ENCODE measurements at regions of chr1 and their contacts with region 1.

Region 1: GRCh38 chr1:60281360-60281932 is 207.9 kb upstream of the C1orf87 start:
- DNase-seq: peak; percentile 61 to 67
- H3K4me3 ChIP-seq: no peak overlapping the region
- H3K27ac ChIP-seq: no peak overlapping the region
- H3K4me1 ChIP-seq: peaks cover 10% of the 10 kb centered on the region in 2 donors
- H3K27me3 ChIP-seq: no peaks in the 10 kb centered on the region
- CTCF ChIP-seq: peak; percentile 72 to 94 (median 88)
- POLR2A ChIP-seq: no peak

Region 2: GRCh38 chr1:60367532-60367931 is 86.1 kb after region 1 on chr1:
- intact Hi-C with region 1: no loop called
- DNase-seq: no peak
- H3K4me3 ChIP-seq: no peak overlapping the region
- H3K27ac ChIP-seq: no peak overlapping the region
- H3K4me1 ChIP-seq: no peaks in the 10 kb centered on the region
- H3K27me3 ChIP-seq: no peaks in the 10 kb centered on the region
- CTCF ChIP-seq: no peak
- POLR2A ChIP-seq: no peak

Region 3: GRCh38 chr1:60573726-60574409 is 292.4 kb after region 1 on chr1:
- intact Hi-C with region 1: no loop called
- DNase-seq: no peak
- H3K4me3 ChIP-seq: no peak overlapping the region
- H3K27ac ChIP-seq: no peak overlapping the region
- H3K4me1 ChIP-seq: peaks cover 16 to 17% of the 10 kb centered on the region in 2 donors
- H3K27me3 ChIP-seq: no peaks in the 10 kb centered on the region
- CTCF ChIP-seq: no peak
- POLR2A ChIP-seq: no peak

Region 4: GRCh38 chr1:60596791-60597747 is 315.6 kb after region 1 on chr1:
- intact Hi-C with region 1: no loop called
- DNase-seq: no peak
- H3K4me3 ChIP-seq: no peak overlapping the region
- H3K27ac ChIP-seq: no peak overlapping the region
- H3K4me1 ChIP-seq: no peaks in the 10 kb centered on the region
- H3K27me3 ChIP-seq: no peaks in the 10 kb centered on the region
- CTCF ChIP-seq: no peak
- POLR2A ChIP-seq: no peak

Region 5: DNA sequence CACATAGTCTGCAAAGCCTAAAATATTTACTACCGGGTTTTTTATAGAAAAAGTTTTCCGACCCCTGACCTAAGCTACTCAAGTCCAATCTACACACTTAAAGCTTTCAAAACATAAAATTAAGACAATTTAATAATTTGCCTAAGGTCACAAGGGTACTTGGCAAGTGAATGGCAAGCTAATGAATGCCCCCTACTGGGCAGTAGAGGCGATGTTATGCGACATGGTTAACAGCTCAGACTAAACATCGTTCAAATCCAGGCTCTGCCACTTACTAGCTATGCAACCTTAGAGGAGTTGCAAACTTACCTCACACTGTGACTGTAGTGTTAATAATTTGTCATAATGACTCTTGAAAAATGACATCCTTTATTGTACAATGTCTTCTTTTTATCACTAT is 483.8 kb after region 1 on chr1:
- intact Hi-C with region 1: loop called (anchors 10 kb)
- DNase-seq: peak; percentile 17 to 23
- H3K4me3 ChIP-seq: no peak overlapping the region
- H3K27ac ChIP-seq: no peak overlapping the region
- H3K4me1 ChIP-seq: no peaks in the 10 kb centered on the region
- H3K27me3 ChIP-seq: no peaks in the 10 kb centered on the region
- CTCF ChIP-seq: peak in 5 of 6 experiments; percentile 17 to 44 (median 44)
- POLR2A ChIP-seq: no peak